Left ventricle myocardium superior (tissue), 1 donor: ENCODE measurements at regions of chr16 and their contacts with region 1.

Region 1: GRCh38 chr16:82738699-82739098 is 111.9 kb downstream of the CDH13 start:
- DNase-seq: no peak
- ATAC-seq: no peak

Region 2: GRCh38 chr16:82639666-82640336 is 98.9 kb before region 1 on chr16:
- intact Hi-C with region 1: loop called (anchors 10 kb)
- DNase-seq: peak; percentile 76
- ATAC-seq: peak; percentile 72

Region 3: GRCh38 chr16:82954224-82954929 is 215.7 kb after region 1 on chr16:
- intact Hi-C with region 1: no loop called
- DNase-seq: no peak
- ATAC-seq: no peak

Region 4: DNA sequence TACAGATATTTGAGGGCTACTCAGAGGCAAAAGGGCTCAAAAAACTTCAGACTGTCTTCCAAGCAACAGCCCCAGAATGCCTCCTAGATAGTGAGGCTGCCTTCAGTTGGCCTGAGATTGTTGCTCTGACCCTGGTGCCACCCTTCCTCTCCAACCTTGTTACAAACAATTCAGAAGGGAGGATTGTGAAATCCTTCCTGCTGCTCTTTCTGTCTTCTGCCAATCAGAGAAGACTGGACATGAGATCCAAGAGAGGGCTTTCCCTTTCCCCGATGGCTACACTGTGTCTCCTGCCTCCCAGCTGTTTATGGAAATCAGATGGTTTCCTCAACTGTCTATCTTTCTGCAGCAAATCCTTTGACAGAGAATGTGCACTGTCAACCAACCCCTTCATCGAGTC is 308.0 kb after region 1 on chr16:
- intact Hi-C with region 1: no loop called
- DNase-seq: no peak
- ATAC-seq: no peak